T-cell (primary cell): ENCODE measurements at regions of chr3 and their contacts with region 1.

Region 1: DNA sequence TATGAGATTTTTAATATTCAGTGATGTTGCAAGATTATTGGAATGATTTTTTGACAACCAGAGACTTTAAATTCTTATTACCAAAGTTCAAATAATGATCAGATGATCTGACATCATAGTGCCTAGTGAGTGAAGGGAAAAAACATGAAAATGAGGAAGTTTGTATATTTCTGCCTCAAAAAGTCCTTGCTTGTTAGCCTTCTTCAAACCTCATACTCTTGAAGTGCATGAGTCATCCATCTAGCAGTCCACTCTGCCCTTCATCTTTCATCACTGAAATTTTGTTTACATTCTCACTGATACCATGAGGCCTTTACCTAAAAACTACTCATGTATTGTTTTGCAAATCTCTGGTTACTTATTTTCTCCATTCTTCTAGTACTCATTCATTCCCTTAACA is 23.9 kb upstream of the OR5H6 start:
- DNase-seq: no peak
- ATAC-seq: no peak
- H3K4me3 ChIP-seq: no peak overlapping the region
- H3K4me3 Mint-ChIP-seq: no peak overlapping the region
- H3K27ac ChIP-seq: no peak overlapping the region
- H3K27ac Mint-ChIP-seq: no peak overlapping the region
- H3K4me1 ChIP-seq: no peaks in the 10 kb centered on the region
- H3K4me1 Mint-ChIP-seq: no peaks in the 10 kb centered on the region
- H3K27me3 ChIP-seq: no peaks in the 10 kb centered on the region
- H3K27me3 Mint-ChIP-seq: peaks cover 0 to 10% of the 10 kb centered on the region in 2 donors

Region 2: GRCh38 chr3:98322101-98322500 is 82.0 kb after region 1 on chr3:
- CTCF ChIA-PET with region 1: interaction called in 1 of 2 experiments, 10 read pairs
- POLR2A ChIA-PET with region 1: no interaction called
- DNase-seq: no peak
- ATAC-seq: no peak
- H3K4me3 ChIP-seq: no peak overlapping the region
- H3K4me3 Mint-ChIP-seq: no peak overlapping the region
- H3K27ac ChIP-seq: no peak overlapping the region
- H3K27ac Mint-ChIP-seq: no peak overlapping the region
- H3K4me1 ChIP-seq: no peaks in the 10 kb centered on the region
- H3K4me1 Mint-ChIP-seq: no peaks in the 10 kb centered on the region
- H3K27me3 ChIP-seq: no peaks in the 10 kb centered on the region
- H3K27me3 Mint-ChIP-seq: peaks cover 3 to 11% of the 10 kb centered on the region in 2 donors